ENCODE measurements at regions of chr2 and their contacts with region 1.

Region 1: DNA sequence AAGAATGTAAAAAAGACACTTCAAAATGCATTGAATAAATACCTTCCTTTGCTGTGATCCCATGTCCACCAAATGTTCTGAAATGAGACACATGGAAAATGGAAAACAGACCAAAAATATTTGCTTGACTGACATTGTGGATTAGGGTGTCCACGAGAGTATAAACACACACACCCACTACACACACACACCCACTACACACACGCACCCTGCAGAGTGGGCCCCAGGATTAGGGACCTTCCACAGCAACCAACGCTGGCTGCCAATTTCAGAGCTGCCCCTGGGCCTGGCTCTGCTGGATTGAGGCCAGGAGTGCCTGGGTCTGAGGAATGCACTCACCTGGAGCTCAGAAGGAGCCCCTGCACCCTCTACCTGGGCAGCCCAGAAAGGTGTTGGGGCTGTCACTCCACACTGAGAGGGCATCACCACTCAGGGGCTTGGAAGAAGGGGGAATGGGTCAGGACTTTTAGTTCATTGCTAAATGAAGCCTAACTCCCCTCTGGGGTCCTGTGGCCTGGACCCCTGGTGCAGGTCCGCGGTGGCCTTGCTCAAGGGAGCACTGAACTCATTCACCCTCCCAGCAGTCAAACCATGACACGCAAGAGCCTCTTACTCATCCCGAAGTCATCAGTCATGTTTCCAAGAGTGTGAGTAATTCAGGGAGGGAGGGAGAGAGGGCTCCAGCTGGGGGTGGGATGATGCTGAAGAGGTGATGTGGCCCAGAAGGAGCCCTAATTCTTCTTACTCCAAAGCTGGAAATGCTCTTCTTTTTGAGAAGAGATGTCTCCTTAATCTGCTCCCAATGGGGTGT is 50.2 kb upstream of the PLB1 start:
- DNase-seq: peak; percentile 86
- H3K4me3 Mint-ChIP-seq: peak overlapping the region; percentile 14
- H3K27ac Mint-ChIP-seq: peak overlapping the region; percentile 99
- H3K4me1 Mint-ChIP-seq: peaks cover 82% of the 10 kb centered on the region
- H3K27me3 Mint-ChIP-seq: peaks cover 4% of the 10 kb centered on the region

Region 2: DNA sequence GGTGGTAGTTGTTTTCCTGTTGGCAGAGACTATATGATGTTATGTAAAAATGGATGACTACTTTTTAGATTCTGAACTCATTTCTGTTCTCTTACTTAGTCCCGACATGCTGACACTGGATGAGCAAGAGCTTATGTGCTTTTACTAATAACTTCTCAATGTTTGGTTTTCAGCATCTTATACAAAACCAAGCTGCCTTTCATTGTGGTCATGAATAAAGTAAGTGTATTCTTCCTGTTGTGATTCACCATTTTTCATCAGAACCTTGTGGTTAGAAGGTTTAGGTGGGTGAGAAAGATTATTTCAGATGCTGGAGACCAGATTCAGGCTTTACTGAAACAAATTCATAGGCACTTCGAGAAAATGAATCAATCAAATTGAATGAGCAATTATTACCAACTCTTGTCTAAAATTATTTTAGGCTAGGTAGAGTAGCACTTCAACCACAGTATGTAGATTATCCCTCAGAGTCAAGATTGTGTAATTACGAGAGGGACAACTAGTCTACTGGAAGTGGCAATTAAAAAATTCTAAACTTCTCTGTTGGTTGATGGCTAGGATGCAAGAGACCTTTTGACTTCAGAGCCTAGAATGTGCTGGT is 807.5 kb before region 1 on chr2:
- CTCF ChIA-PET with region 1: no interaction called
- POLR2A ChIA-PET with region 1: no interaction called
- intact Hi-C with region 1: loop called (anchors 1 kb)
- DNase-seq: no peak
- H3K4me3 Mint-ChIP-seq: peak overlapping the region; percentile 33
- H3K27ac Mint-ChIP-seq: peak overlapping the region; percentile 99
- H3K4me1 Mint-ChIP-seq: peaks cover 35% of the 10 kb centered on the region
- H3K27me3 Mint-ChIP-seq: no peaks in the 10 kb centered on the region

Region 3: GRCh38 chr2:27723372-27724144 is 722.1 kb before region 1 on chr2:
- CTCF ChIA-PET with region 1: interaction called, 5 read pairs
- POLR2A ChIA-PET with region 1: no interaction called
- intact Hi-C with region 1: loop called (anchors 5 kb)
- DNase-seq: peak; percentile 44
- H3K4me3 Mint-ChIP-seq: no peak overlapping the region
- H3K27ac Mint-ChIP-seq: no peak overlapping the region
- H3K4me1 Mint-ChIP-seq: peaks cover 29% of the 10 kb centered on the region
- H3K27me3 Mint-ChIP-seq: peaks cover 2% of the 10 kb centered on the region

Region 4: GRCh38 chr2:27860111-27860510 is 585.5 kb before region 1 on chr2:
- CTCF ChIA-PET with region 1: no interaction called
- POLR2A ChIA-PET with region 1: interaction called, 4 read pairs
- intact Hi-C with region 1: loop called (anchors 5 kb)
- DNase-seq: no peak
- H3K4me3 Mint-ChIP-seq: no peak overlapping the region
- H3K27ac Mint-ChIP-seq: peak overlapping the region; percentile 67
- H3K4me1 Mint-ChIP-seq: peaks cover 52% of the 10 kb centered on the region
- H3K27me3 Mint-ChIP-seq: no peaks in the 10 kb centered on the region

Region 5: DNA sequence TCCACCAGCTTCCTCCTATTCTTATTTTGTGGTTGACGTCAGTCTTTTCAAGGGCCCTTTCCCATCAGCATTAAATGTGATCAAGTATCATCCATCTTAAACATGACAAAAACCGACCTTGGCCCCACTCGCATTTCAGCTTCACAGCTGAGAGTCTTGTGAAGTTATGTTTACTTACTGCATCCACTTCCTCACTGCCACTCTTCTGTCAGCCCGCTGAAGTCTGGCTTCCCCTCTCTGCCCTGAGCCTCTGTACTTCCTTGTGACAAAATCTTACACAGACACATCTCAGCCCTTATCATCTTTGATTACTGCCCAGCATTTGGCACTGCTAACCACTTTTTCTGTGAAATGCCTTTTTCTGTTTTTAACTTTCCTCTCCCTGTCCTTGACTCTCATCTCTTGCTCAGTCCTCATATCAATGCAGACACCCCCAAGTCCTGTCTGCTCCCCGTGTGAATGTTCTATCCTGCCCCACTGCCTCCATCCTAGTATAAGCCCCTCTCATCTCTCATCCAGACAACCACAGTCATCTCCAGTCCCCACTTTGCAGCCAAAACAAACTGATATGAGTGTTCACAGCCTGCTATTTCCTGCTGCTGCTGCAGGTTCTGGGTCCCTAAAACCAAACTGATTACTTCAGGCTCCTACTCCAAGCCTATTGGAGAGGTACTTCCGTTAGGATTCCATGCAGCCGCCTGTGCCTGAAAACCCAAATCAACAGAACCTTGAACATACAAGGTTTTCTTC is 21.6 kb before region 1 on chr2:
- CTCF ChIA-PET with region 1: interaction called, 3 read pairs
- POLR2A ChIA-PET with region 1: interaction called, 7 read pairs
- intact Hi-C with region 1: loop called (anchors 1 kb)
- DNase-seq: peak; percentile 57
- H3K4me3 Mint-ChIP-seq: peak overlapping the region; percentile 24
- H3K27ac Mint-ChIP-seq: peak overlapping the region; percentile 86
- H3K4me1 Mint-ChIP-seq: peaks cover 49% of the 10 kb centered on the region
- H3K27me3 Mint-ChIP-seq: no peaks in the 10 kb centered on the region

Region 6: DNA sequence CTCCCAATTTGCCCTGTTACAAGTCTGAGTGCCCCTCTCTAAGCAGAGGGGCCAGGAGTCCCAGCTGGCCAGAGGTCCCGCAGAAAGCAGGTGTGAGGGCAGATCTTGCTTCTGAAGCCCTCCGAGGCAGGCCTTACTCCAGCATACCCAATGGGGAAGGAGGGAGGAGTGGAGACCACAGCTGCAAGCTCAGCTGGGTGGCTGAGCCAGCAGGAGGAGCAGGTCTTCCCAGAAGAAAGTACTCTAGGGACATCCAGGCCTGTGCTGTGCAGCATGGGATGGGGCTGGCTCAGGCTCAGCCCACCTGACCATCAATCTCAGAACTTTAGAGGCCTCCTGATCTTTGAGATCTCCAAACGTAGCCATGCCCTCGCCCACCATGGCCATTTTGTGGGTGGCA is 81.5 kb after region 1 on chr2:
- CTCF ChIA-PET with region 1: no interaction called
- POLR2A ChIA-PET with region 1: no interaction called
- intact Hi-C with region 1: no loop called
- DNase-seq: no peak
- H3K4me3 Mint-ChIP-seq: no peak overlapping the region
- H3K27ac Mint-ChIP-seq: no peak overlapping the region
- H3K4me1 Mint-ChIP-seq: peaks cover 3% of the 10 kb centered on the region
- H3K27me3 Mint-ChIP-seq: peaks cover 18% of the 10 kb centered on the region

Measured in activated CD4-positive, alpha-beta memory T cell treated with anti-CD3 and anti-CD28 coated beads for 36 hours (primary cell).